ENCODE measurements at regions of chr6 and their contacts with region 1.

Region 1: GRCh38 chr6:2103644-2104523 is 141.5 kb downstream of the GMDS start:
- DNase-seq: no peak
- H3K4me3 ChIP-seq: no peak overlapping the region
- CTCF ChIP-seq: peak; percentile 40

Region 2: DNA sequence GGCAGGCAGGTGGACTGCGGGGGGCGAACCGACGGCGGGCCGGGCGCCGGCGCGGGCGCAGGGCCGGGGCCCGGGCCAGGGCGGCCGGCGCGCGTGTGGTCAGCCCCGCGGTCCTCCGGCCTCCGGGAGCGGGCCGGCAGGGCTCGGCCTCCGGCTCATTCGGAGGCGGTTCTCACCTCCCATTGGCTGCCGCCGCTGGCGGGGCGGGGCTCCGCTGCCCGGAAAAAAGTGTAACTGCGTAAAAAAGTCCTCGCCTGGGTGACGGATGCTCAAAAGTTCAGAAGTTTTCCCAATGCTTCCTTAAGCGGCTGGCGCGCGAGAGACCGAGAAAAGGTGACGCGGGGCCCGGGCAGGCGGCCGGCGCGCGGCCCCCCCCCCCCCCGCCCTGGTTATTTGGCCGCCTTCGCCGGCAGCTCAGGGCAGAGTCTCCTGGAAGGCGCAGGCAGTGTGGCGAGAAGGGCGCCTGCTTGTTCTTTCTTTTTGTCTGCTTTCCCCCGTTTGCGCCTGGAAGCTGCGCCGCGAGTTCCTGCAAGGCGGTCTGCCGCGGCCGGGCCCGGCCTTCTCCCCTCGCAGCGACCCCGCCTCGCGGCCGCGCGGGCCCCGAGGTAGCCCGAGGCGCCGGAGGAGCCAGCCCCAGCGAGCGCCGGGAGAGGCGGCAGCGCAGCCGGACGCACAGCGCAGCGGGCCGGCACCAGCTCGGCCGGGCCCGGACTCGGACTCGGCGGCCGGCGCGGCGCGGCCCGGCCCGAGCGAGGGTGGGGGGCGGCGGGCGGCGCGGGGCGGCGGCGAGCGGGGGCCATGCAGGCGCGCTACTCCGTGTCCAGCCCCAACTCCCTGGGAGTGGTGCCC is 494.0 kb before region 1 on chr6 and contains the start of gene FOXC1:
- CTCF ChIA-PET with region 1: interaction called, 36 read pairs
- POLR2A ChIA-PET with region 1: no interaction called
- DNase-seq: peak; percentile 57
- H3K4me3 ChIP-seq: peak within 1 kb of the TSS; percentile 72
- CTCF ChIP-seq: no peak

Region 3: GRCh38 chr6:1893470-1894130 is 210.3 kb before region 1 on chr6:
- CTCF ChIA-PET with region 1: interaction called, 18 read pairs
- POLR2A ChIA-PET with region 1: no interaction called
- DNase-seq: no peak
- H3K4me3 ChIP-seq: no peak overlapping the region
- CTCF ChIP-seq: peak; percentile 22

Region 4: DNA sequence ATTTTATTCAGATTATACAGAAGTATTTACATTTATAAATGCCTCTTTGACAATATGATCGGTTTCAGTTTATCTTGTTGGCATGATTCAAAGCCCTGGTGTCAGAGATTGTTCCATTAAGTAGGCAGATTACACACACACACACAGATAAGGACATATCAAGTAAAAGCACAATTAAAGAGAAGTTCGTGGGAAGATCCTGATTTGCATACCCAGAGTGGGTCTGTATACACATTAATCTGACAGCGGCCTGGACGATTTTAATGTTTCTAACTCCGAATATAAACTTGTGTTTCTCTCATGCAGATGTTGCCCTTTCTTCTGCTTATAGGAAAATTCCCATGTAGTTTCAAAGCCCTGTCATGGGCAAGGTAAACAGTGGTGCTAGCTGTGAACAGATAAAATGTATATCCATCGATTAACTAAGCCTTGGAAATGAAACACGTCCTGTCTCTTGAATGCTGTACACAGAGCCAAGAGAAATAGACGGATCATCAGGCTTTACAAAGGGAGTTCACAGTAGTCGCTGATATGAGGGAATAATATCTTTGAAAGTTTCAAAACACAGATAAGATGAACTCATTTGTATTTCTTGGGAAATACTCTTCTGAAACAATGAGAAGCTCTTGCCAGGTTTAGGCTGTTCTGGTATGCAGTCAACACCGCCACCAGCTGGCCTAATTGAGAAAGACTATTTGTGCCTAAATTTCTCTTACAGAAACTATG is 249.7 kb after region 1 on chr6:
- CTCF ChIA-PET with region 1: interaction called, 12 read pairs
- POLR2A ChIA-PET with region 1: no interaction called
- DNase-seq: peak; percentile 17
- H3K4me3 ChIP-seq: no peak overlapping the region
- CTCF ChIP-seq: peak; percentile 68

Measured in AG04449 (cell line).